Activated B cell treated with CpG ODN at 0.5 μM for 24 hours (primary cell): ENCODE measurements at regions of chr17 and their contacts with region 1.

Region 1: DNA sequence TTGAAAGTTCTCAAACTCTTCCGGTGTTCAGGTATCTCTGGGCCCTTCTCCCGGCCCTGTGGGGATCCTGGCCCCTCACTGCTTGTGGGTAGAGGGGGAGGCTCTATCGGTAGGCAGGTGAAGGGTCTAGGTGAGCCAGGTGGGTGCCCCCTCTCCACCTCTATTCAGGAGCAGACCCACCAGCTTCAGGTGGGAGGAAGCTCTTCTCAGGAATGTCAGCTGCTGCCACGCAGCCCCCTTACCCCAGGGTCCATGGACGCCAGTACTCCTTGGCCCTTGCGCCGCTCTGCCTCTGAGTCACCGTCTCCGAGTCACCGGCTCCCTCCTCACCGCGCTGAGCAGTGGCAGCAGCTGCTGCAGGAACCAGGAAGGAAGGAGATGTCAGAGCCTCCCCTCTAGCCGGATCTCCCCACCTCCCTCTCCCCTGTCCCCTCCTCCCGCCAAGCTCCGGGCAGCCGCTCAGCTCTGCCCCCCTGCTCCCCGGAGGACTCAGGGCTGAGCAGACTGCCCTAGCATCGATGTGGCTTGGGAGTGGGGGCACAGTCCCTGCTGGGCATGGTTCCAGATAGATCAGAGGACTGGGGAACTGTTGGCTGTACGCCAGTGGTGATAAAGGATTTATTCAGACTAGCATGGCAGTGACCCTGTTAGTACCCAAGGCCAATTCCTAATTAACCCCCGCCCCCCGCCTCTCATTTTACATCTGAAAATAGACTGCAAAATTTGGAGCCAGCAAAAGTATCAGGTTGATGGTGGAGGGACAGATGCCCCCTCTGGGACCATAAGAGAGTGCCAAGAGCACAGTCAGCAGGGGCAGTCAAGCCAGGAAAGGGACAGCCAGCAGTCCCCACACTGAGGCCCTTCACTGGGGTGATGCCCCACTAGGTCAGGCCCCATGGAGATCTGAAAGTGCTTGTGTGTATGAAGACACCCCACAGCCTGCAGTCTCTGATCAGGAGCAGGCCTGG is at the start of gene OSBPL7:
- DNase-seq: peak; percentile 55
- ATAC-seq: peak; percentile 98
- H3K4me3 Mint-ChIP-seq: peak within 1 kb of the TSS; percentile 96
- H3K27ac Mint-ChIP-seq: peak within 1 kb of the TSS; percentile 77
- H3K4me1 Mint-ChIP-seq: peaks cover 26% of the 10 kb centered on the region
- H3K27me3 Mint-ChIP-seq: no peaks in the 10 kb centered on the region
- CTCF ChIP-seq: no peak
- total RNA-seq, gene OSBPL7: 28.8 and 34.4 TPM in 2 replicates

Region 2: DNA sequence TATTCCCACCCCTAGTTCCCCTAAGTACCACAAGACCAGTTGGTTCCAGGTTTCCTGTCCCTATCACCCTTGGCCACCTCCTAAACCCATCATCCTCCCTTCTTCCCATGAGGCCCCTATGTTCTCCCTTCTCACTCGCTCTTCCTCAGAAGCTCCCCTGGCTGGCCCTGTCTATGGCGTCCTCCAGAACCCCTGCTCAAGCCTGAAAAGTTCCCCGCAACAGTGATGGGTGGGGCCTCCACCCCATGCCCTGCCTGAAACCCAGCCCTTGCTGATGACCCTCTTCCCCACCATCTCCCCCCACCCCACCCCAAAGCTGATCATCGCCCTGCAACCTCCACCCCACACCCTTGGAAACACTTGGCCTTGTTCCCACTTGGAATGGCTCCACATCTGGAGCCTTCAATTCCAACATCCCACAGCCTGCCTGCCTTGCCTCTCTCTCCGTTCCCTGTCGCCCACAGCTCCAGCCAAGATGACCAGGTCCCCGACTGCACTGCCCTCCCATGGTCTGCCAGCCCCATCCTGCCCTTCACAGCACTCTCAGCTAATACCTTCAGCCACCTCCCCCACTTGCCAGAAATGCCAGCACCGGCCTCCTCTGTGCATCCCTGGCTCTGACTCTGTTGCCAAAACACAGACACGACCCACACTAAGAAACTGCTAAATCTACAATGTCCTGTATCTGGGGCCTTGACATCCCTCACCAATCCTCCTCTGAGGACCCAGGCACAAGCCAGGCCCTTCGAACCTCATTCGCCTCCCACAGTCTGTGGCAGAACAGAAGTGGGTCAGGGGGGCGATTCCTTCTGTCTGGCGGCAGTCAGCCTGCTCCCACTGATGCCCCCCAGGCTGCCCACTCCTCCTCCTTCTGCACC is 10.6 kb before region 1 on chr17:
- CTCF ChIA-PET with region 1: no interaction called
- POLR2A ChIA-PET with region 1: interaction called, 14 read pairs
- intact Hi-C with region 1: no loop called
- DNase-seq: no peak
- ATAC-seq: no peak
- H3K4me3 Mint-ChIP-seq: no peak overlapping the region
- H3K27ac Mint-ChIP-seq: peak overlapping the region; percentile 11
- H3K4me1 Mint-ChIP-seq: no peaks in the 10 kb centered on the region
- H3K27me3 Mint-ChIP-seq: no peaks in the 10 kb centered on the region
- CTCF ChIP-seq: no peak